ENCODE measurements at regions of chr3 and their contacts with region 1.

Region 1: DNA sequence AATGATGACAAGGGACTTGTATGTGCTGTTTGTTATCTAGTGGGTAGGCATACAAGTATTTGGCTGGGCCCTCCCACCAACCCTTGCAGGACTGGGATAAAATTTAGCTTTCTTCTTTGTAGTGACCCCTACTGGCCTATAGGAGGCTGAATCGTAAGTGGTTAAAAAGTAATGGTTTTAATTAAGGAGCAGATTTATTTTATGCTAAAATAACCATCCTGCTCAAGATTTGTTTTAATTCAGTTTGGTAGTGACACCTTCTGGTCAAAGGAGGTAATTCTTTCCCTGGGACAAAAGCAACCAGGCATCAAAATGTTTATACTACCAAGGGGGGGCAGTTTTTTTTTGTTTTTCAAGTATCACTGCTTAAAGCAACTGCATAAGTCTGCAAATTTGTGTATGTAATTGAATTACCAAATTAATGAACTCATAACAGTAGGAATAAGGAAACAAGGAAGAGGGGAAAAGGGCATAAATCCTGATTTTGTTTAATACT is 70.7 kb downstream of the TOP2B start:
- DNase-seq: no peak
- ATAC-seq: peak in 3 of 4 donors; percentile 42 to 65 (median 51)
- H3K4me3 ChIP-seq: no peak overlapping the region
- H3K27ac ChIP-seq: peak overlapping the region in 10 of 12 donors; percentile 11 to 74 (median 54)
- H3K4me1 ChIP-seq: peaks cover 0 to 46% (median 34%) of the 10 kb centered on the region in 12 donors
- H3K27me3 ChIP-seq: no peaks in the 10 kb centered on the region
- CTCF ChIP-seq: peak; percentile 71 to 94 (median 82)
- POLR2A ChIP-seq: no peak

Region 2: DNA sequence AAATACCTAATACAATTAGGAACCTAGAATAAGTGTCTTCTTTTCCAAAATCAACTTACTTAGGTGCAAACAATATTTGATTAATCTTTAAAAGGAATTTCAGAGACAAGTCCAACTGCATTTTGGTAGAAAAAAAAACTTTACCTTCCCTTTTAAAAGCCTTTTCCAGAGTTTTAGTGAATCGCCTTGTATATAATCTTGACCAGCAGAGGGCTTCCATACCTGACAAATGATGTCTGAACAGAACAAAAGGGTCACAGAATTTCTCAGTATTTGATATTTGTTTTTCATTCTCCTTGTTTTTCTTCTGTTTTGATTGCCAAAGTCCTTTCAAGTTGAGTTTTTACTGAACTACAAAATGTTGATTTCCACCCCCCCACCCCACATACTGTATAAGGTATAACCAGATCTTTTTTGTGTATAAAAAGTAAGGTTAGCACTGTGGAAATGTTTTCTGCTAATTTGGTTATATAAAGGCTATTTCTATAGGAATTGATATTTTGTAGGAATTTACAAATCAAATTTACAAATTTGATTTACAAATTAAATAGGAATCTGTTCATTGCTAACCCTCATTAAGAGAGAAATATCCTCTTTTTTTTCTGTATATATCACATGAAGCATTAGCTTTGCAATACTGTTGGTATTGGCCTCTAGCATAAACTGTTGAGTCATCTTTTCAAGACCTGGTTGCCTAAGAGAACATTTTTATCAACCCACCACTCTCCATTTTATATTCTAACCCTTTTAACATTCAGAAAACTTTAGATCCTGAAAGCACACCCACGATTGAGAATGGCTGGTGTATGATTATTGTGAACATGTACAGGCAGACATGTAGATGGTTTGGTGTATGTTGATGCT is 630.1 kb before region 1 on chr3:
- intact Hi-C with region 1: loop called (anchors 2 to 10 kb)
- DNase-seq: no peak
- ATAC-seq: no peak
- H3K4me3 ChIP-seq: no peak overlapping the region
- H3K27ac ChIP-seq: no peak overlapping the region
- H3K4me1 ChIP-seq: no peaks in the 10 kb centered on the region
- H3K27me3 ChIP-seq: no peaks in the 10 kb centered on the region
- CTCF ChIP-seq: peak; percentile 33 to 68 (median 55)
- POLR2A ChIP-seq: no peak

Region 3: GRCh38 chr3:25033407-25034029 is 560.5 kb before region 1 on chr3:
- intact Hi-C with region 1: loop called in 4 of 10 experiments (anchors 5 to 10 kb)
- DNase-seq: peak in 4 of 5 donors; percentile 54 to 77 (median 62)
- ATAC-seq: peak; percentile 74 to 86 (median 82)
- H3K4me3 ChIP-seq: no peak overlapping the region
- H3K27ac ChIP-seq: no peak overlapping the region
- H3K4me1 ChIP-seq: peaks cover 0 to 20% (median 11%) of the 10 kb centered on the region in 12 donors
- H3K27me3 ChIP-seq: no peaks in the 10 kb centered on the region
- CTCF ChIP-seq: peak; percentile 55 to 74 (median 60)
- POLR2A ChIP-seq: no peak

Region 4: GRCh38 chr3:25156626-25157025 is 437.4 kb before region 1 on chr3:
- intact Hi-C with region 1: loop called in 1 of 10 experiments (anchors 10 kb)
- DNase-seq: no peak
- ATAC-seq: peak; percentile 86 to 99 (median 91)
- H3K4me3 ChIP-seq: peak overlapping the region in 1 of 12 donors; percentile 24
- H3K27ac ChIP-seq: peak overlapping the region in 3 of 12 donors; percentile 27 to 42 (median 40)
- H3K4me1 ChIP-seq: peaks cover 0 to 14% (median 0%) of the 10 kb centered on the region in 12 donors
- H3K27me3 ChIP-seq: no peaks in the 10 kb centered on the region
- CTCF ChIP-seq: no peak
- POLR2A ChIP-seq: no peak

Region 5: DNA sequence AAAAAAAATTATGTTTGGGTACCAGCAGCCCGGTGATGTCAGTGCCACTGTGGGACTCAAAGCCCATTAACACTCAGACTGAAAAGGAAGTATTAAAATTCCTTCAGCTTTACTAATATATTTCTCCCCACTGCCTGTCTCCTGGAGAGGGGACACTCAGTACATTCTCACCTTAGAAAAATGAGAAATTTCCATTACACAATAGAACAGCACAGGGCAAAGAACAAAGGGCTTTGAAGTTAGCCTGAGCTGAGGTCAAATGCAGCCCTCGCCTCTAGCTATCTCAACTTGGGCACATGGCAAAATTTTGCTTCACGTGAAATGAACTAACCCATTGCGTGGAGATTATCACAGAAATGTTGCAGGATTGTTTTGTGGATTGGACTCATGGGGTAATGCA is 85.2 kb before region 1 on chr3:
- intact Hi-C with region 1: loop called in 1 of 10 experiments (anchors 5 kb)
- DNase-seq: no peak
- ATAC-seq: peak; percentile 30 to 74 (median 51)
- H3K4me3 ChIP-seq: no peak overlapping the region
- H3K27ac ChIP-seq: peak overlapping the region; percentile 24 to 76 (median 64)
- H3K4me1 ChIP-seq: peaks cover 0 to 68% (median 29%) of the 10 kb centered on the region in 12 donors
- H3K27me3 ChIP-seq: no peaks in the 10 kb centered on the region
- CTCF ChIP-seq: no peak
- POLR2A ChIP-seq: no peak